Naive thymus-derived CD8-positive, alpha-beta T cell (primary cell): ENCODE measurements at regions of chr6 and their contacts with region 1.

Region 1: DNA sequence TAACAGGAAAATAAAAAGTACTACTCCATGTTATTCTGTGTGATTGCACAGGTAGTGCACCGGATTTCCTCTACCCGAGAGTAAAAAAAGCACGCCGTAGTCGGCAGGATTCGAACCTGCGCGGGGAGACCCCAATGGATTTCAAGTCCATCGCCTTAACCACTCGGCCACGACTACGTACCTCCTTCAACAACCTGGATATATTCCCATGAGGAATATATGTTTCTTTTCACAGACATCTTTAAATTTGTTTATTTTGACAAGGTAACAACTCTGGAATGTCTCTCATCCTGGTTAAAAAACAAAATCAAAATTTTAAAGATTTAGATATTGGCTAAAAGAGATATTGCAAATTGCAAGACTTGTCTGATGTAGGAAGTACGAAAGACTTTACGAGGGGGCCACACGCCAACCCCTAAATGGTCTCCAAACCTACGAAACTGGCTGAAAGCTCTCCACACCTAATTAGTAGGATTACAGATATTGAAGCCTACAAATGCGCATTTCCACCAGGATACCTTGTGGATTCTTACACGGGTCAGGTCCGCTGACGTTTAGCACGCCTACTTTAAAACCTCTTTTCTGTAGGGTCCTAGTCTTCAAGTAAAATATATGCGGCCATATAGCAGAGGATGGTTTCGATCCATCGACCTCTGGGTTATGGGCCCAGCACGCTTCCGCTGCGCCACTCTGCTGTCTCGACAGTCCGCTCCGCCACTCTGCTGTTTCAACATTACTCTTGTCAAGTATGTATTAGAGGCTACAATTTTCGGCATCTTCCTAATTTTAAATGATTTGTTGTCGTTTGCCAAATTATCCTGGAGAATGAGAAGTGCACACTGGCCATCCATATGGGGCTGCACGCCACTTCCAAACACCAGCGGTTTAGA is 52.3 kb upstream of the BTN3A2 start:
- DNase-seq: peak; percentile 65 to 94 (median 86)
- ATAC-seq: peak; percentile 71 to 81
- H3K4me3 Mint-ChIP-seq: peak overlapping the region; percentile 92 to 97 (median 94)
- H3K27ac Mint-ChIP-seq: peak overlapping the region; percentile 74 to 100 (median 94)
- H3K4me1 Mint-ChIP-seq: peaks cover 20 to 47% (median 41%) of the 10 kb centered on the region in 4 donors
- H3K27me3 Mint-ChIP-seq: peaks cover 0 to 6% (median 0%) of the 10 kb centered on the region in 5 donors

Region 2: DNA sequence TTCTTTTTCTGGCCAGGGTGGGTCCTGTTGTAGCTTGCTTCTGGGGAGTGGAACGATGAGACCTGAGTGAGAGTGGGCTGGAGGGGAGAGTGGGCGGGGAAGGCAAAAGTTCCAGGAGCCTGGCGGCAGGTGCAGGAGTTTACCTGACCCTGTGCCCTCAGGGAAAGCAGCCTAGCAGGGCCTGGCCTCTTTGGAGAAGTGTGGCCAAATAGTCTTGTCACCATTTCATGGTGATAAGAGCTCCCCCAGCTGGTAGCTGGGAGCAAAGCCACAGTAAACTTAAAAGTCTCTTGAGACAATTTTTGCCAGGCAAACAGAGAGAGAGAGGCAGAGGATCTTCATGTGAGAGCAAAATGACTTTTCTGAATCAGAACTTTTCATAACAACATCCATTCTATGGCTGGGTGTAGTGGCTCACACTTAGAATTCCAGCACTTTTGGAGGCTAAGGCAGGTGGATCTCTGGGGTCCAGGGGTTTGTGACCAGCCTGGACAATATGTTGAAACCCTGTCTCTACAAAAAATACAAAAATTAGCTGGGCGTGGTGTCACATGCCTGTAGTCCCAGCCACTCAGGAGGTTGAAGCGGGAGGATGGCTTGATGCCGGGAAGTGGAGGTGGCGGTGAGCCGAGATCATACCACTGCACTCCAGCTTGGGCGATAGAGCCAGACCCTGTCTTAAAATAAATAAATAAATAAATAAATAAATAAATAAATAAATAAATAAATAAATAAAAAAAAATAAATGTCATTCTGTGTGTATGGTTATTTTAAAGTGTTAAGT is 822.5 kb before region 1 on chr6:
- POLR2A ChIA-PET with region 1: no interaction called
- DNase-seq: peak; percentile 37 to 84 (median 65)
- ATAC-seq: peak; percentile 78 to 96
- H3K4me3 Mint-ChIP-seq: no peak overlapping the region
- H3K27ac Mint-ChIP-seq: peak overlapping the region in 6 of 10 donors; percentile 22 to 89 (median 58)
- H3K4me1 Mint-ChIP-seq: peaks cover 6 to 9% (median 8%) of the 10 kb centered on the region in 4 donors
- H3K27me3 Mint-ChIP-seq: no peaks in the 10 kb centered on the region

Region 3: DNA sequence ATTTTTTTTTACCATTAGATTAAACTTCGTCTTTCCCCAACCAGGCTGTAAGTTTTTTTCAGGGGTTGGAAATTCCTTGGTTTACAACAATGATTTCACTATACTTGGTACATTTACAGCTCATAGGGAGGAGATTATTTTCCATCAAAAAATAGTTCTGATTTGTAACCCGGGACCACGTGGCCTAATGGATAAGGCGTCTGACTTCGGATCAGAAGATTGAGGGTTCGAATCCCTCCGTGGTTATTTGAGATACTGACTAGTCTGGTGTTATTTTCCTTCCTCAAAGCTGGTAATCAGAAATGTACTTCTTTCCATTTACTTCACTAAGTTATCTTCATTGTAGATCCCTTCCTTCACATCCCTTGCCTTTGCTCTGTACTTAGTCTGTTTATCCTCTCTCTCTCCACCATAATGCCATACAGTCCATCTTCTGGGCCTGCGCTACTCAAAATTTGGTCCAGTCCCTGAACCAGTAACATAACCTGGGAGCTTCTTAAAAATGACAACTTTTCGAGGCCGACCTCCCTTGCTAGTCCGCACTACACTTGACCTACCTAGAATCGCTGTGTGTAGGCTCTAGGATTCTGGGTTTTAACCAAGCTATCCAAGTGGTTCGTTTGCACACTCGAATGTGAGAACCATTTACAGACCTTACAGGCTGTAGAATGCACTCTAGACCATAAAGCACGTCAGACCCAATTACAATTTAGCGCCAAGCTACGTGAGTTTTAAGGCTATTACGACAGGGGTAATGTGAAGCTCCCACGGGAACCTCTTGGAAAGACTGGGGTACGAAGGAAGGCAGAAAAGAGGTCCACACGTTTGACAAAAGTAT is 10.1 kb after region 1 on chr6:
- POLR2A ChIA-PET with region 1: interaction called, 39 read pairs
- DNase-seq: peak in 9 of 10 donors; percentile 33 to 84 (median 78)
- ATAC-seq: peak; percentile 60 to 72
- H3K4me3 Mint-ChIP-seq: peak overlapping the region; percentile 80 to 91 (median 88)
- H3K27ac Mint-ChIP-seq: peak overlapping the region; percentile 49 to 93 (median 88)
- H3K4me1 Mint-ChIP-seq: peaks cover 17 to 35% (median 26%) of the 10 kb centered on the region in 4 donors
- H3K27me3 Mint-ChIP-seq: peaks cover 2 to 25% (median 9%) of the 10 kb centered on the region in 5 donors

Region 4: DNA sequence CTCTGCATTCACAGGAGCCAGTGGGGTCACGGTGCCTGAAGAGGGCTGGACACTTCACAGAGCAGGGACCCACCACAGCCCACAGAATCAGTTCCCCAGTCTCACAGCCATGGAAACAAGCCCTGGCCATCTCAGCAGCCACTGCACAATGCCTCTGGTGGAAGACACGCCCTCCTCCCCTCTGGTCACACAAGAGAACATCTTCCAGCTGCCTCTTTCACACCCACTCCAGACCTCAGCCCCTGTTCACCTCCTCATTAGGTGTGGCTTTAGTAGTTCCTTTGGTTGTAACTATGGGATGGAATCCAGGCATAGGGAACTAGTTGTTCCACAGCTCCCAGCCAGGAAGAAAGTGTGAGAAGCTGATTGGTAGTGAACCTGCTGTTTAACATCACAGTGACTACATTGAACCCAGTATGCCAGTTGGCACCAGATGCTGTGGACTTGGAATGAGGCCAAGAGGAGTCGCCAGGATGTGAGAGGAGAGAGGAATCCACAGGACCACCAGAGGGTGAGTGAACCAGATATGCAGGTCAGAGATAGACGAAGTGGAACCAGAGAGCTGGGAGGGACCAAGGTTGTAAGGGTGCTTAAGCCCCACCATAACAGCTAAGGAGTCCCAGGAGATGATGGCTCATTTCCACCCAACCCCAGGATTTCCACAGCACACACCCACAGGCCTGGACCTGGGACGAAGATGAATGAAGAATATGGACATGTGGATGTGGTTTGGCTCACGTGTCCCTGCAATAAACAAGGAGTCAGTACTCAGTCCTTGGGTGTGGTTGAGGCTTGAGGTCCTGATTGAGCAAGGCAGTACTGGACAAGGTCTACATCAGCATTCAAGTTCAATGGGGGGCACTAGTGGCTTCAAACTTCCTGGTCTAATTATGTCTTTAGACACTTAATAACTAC is 118.8 kb after region 1 on chr6:
- POLR2A ChIA-PET with region 1: no interaction called
- DNase-seq: no peak
- ATAC-seq: no peak
- H3K4me3 Mint-ChIP-seq: no peak overlapping the region
- H3K27ac Mint-ChIP-seq: peak overlapping the region in 1 of 10 donors; percentile 73
- H3K4me1 Mint-ChIP-seq: peaks cover 0 to 8% (median 0%) of the 10 kb centered on the region in 4 donors
- H3K27me3 Mint-ChIP-seq: no peaks in the 10 kb centered on the region

Region 5: DNA sequence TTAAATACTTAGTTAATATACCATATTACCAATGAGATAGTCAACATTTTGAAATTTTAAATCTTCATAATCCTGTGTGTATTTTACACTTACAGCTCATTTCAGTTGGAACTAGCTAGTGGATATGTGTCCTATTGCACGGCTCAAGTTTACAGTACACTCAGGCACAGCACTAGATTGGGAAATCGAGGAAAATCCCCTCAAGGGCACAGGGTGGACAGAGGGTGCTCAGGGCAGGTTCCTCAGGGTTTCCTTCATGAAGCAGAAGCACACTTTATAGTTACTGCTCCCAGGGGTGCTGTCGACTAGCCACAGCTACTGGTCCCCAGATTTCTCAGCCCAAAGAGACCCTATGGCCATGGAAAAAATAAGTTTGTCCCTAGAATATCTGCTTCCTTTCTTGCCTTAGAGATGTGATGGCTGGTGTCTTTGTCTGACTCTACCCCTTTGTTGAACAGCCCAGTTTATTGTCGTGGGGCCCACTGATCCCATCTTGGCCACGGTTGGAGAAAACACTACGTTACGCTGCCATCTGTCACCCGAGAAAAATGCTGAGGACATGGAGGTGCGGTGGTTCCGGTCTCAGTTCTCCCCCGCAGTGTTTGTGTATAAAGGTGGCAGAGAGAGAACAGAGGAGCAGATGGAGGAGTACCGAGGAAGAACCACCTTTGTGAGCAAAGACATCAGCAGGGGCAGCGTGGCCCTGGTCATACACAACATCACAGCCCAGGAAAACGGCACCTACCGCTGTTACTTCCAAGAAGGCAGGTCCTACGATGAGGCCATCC is 146.5 kb after region 1 on chr6:
- POLR2A ChIA-PET with region 1: no interaction called
- DNase-seq: no peak
- ATAC-seq: no peak
- H3K4me3 Mint-ChIP-seq: peak overlapping the region; percentile 72 to 98 (median 88)
- H3K27ac Mint-ChIP-seq: peak overlapping the region; percentile 76 to 92 (median 84)
- H3K4me1 Mint-ChIP-seq: peaks cover 44 to 82% (median 79%) of the 10 kb centered on the region in 4 donors
- H3K27me3 Mint-ChIP-seq: no peaks in the 10 kb centered on the region